Activated naive CD8-positive, alpha-beta T cell treated with anti-CD3 and anti-CD28 coated beads, Interleukin-2, amount 10 ng/mL, durations not matched to agents 7 days and 5 days (primary cell): ENCODE measurements at regions of chr1 and their contacts with region 1.

Region 1: GRCh38 chr1:173867753-173868265 is at the start of gene GAS5:
- DNase-seq: peak; percentile 95
- ATAC-seq: peak; percentile 79
- H3K4me3 Mint-ChIP-seq: peak within 1 kb of the TSS; percentile 97
- H3K27ac Mint-ChIP-seq: peak within 1 kb of the TSS; percentile 95
- H3K4me1 Mint-ChIP-seq: peaks cover 57% of the 10 kb centered on the region
- H3K27me3 Mint-ChIP-seq: no peaks in the 10 kb centered on the region
- total RNA-seq, gene GAS5: 421 to 434 TPM

Region 2: DNA sequence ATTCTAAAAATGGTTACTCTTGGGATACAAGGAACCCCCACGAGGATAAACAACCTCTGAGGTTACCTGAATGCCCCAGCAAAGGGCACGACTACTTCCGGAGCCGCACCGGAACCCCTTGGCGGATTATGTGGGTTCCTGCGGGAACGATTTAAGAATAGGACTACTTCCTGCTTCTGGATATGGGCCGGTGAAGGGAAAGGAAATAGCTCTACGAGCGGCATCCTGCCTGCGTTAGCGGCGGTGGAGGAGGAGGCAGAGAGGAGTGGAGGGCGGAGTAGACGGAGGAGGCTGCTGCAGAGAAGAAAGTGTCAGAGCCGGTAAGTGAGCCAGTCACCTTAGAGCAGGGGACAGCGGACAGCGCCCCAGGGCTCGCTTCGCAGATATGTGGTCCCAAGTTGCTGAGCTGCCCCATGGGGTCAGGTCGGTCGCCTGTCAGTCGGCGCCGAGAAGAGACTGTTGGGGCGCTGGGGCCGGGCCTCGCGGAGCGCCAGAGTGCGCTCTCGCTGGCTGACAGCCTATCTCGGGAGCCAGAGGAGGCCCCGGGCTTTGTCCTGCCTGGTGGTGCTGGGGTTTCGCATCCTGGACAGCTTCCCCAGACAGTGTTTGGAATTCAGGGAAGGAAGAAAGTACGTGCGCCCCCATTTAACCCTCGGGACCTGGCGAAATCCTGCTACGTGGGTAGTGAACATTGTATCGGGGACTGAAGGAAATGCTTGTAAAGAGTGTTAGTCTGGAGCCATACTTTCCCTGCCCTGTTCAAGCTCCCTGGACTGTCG is 152.9 kb before region 1 on chr1 and contains the start of gene KLHL20:
- POLR2A ChIA-PET with region 1: interaction called, 12 read pairs
- DNase-seq: peak; percentile 82
- ATAC-seq: peak; percentile 99
- H3K4me3 Mint-ChIP-seq: peak within 1 kb of the TSS; percentile 97
- H3K27ac Mint-ChIP-seq: peak within 1 kb of the TSS; percentile 98
- H3K4me1 Mint-ChIP-seq: peaks cover 16% of the 10 kb centered on the region
- H3K27me3 Mint-ChIP-seq: peaks cover 15% of the 10 kb centered on the region
- total RNA-seq, gene KLHL20: 27.7 to 28.0 TPM

Region 3: DNA sequence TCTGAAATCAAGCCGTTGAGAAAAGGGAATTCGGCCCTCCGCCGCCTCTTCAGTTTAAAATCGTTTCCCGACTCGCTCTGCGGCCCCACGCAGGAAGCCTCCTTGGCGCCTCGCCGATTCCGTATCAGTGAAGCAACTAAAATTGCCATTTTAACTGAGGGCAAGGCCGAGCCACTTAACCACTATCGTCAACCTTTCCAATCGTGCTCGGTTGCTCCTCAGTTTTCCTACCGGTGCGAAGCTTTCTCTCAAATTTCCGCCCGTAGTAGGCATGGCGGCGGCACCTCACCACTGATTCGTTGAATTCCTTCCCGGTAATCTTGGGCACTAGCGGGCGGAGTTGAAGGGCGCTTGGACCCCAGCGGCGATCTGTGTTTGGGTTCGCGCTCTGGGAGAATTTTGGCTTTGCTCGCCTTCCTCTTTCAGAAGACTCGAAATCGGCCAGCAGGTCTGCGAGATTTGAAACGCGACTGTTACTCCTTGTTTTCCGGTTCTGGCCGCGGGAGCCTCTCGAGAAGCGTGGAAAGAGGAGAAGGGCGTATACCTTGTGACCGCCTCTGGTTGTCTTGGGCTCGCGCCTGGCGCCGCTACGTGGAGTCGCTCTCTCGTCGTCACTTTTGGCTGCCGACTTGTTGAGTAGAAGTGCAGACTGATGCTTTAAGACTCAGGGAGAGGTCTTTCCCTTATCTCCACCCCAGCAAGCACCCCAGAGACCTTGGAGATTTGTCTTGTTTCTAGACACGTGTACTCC is 43.3 kb before region 1 on chr1 and contains the starts of genes CENPL and DARS2:
- POLR2A ChIA-PET with region 1: interaction called, 33 read pairs
- DNase-seq: peak; percentile 84
- ATAC-seq: peak; percentile 88
- H3K4me3 Mint-ChIP-seq: peak within 1 kb of the TSS; percentile 92
- H3K27ac Mint-ChIP-seq: peak within 1 kb of the TSS; percentile 95
- H3K4me1 Mint-ChIP-seq: peaks cover 39% of the 10 kb centered on the region
- H3K27me3 Mint-ChIP-seq: no peaks in the 10 kb centered on the region
- total RNA-seq, gene CENPL: 33.9 to 34.0 TPM
- total RNA-seq, gene DARS2: 21.6 to 22.5 TPM

Region 4: GRCh38 chr1:173925306-173926242 is 57.8 kb after region 1 on chr1:
- POLR2A ChIA-PET with region 1: no interaction called
- DNase-seq: no peak
- ATAC-seq: no peak
- H3K4me3 Mint-ChIP-seq: no peak overlapping the region
- H3K27ac Mint-ChIP-seq: no peak overlapping the region
- H3K4me1 Mint-ChIP-seq: no peaks in the 10 kb centered on the region
- H3K27me3 Mint-ChIP-seq: peaks cover 7% of the 10 kb centered on the region

Region 5: DNA sequence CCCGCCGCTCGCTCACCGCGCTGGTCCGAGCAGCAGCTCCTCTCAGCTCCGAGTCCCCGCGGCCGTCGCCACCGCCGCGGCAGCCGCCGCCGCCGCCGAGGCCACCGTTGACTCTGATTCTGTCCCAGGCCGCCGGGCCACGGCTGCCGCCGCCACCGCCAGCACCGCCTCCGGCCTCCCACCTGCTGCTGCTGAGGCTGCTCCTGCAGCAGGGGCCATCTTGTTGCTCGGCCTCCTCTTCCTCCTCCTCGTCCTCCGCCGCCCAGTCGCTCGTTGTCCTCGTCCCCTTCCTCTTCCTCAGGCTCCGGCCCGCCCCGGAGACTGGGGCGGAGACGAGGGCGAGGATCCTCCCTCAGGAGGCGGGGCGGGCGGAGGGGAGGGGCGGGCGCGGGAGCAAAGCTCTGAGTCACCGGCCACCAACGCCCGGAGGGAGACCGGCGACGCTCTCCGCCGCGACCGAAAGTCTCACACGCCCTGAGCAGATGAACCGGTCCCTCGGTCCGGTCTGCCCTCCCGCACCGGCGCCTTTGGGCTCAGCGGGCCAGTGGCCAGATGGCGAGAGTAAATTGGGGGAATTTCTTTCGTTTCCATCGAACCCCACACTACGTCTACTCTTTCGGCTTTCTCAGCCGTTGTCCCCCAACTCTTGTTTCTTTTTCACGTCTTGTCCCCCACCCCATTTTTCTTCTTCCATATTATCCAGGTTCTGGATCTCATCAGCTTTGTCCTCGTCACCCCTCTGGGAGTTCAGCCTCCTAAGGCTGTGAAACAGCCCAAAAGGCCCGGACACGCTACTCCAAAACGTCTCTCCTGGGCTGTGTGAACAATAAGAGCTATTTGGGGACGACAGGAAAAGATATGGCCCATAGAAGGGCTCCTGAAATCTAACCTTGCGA is 154.5 kb after region 1 on chr1 and contains the start of gene RC3H1:
- POLR2A ChIA-PET with region 1: interaction called, 12 read pairs
- DNase-seq: peak; percentile 90
- ATAC-seq: peak; percentile 92
- H3K4me3 Mint-ChIP-seq: peak within 1 kb of the TSS; percentile 99
- H3K27ac Mint-ChIP-seq: peak within 1 kb of the TSS; percentile 98
- H3K4me1 Mint-ChIP-seq: peaks cover 32% of the 10 kb centered on the region
- H3K27me3 Mint-ChIP-seq: no peaks in the 10 kb centered on the region
- total RNA-seq, gene RC3H1: 37.2 to 41.7 TPM